Activated CD4-positive, alpha-beta T cell treated with anti-CD3 and anti-CD28 coated beads for 36 hours (primary cell): ENCODE measurements at regions of chr18 and their contacts with region 1.

Region 1: DNA sequence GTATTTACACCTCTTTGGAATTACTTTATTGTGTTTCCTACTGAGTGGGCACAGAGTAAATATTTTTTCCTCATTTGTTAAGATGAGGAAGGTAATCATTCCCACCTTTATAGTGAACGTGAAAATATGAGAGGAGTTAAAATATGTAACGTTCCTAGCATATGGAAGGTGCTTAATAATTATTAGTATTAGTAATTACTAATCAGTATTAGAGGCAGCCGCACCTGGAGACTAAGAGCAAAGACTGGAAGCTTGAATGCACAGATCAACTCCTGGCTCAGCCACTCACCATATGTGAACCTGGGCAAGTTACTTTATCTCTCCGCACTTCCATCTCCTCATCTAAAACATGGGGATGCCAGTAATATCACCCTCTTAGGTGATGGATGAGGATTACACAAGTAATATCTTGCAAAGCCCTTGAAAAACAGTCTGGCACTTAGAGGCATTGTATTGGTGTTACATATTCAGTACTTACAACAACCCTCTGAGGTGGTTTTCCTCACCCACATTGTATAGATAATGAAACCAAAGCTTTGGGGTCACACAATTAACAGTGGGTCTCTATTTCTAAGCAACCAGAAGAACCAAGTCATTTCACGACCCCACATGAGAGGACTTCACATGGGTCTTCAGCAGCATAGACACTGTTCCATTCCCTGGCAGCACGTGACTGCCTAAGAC is 100.3 kb upstream of the KCTD1 start:
- DNase-seq: no peak
- ATAC-seq: no peak
- H3K4me3 Mint-ChIP-seq: no peak overlapping the region
- H3K27ac Mint-ChIP-seq: no peak overlapping the region
- H3K4me1 Mint-ChIP-seq: no peaks in the 10 kb centered on the region
- H3K27me3 Mint-ChIP-seq: peaks cover 31% of the 10 kb centered on the region

Region 2: GRCh38 chr18:26192233-26192632 is 456.4 kb before region 1 on chr18:
- CTCF ChIA-PET with region 1: no interaction called
- POLR2A ChIA-PET with region 1: no interaction called
- intact Hi-C with region 1: no loop called
- DNase-seq: no peak
- ATAC-seq: no peak
- H3K4me3 Mint-ChIP-seq: no peak overlapping the region
- H3K27ac Mint-ChIP-seq: no peak overlapping the region
- H3K4me1 Mint-ChIP-seq: peaks cover 14% of the 10 kb centered on the region
- H3K27me3 Mint-ChIP-seq: no peaks in the 10 kb centered on the region

Region 3: GRCh38 chr18:26307189-26307773 is 341.4 kb before region 1 on chr18:
- CTCF ChIA-PET with region 1: no interaction called
- POLR2A ChIA-PET with region 1: no interaction called
- intact Hi-C with region 1: loop called in 1 of 2 experiments (anchors 1 kb)
- DNase-seq: peak; percentile 10
- ATAC-seq: peak; percentile 58
- H3K4me3 Mint-ChIP-seq: no peak overlapping the region
- H3K27ac Mint-ChIP-seq: no peak overlapping the region
- H3K4me1 Mint-ChIP-seq: no peaks in the 10 kb centered on the region
- H3K27me3 Mint-ChIP-seq: no peaks in the 10 kb centered on the region

Region 4: DNA sequence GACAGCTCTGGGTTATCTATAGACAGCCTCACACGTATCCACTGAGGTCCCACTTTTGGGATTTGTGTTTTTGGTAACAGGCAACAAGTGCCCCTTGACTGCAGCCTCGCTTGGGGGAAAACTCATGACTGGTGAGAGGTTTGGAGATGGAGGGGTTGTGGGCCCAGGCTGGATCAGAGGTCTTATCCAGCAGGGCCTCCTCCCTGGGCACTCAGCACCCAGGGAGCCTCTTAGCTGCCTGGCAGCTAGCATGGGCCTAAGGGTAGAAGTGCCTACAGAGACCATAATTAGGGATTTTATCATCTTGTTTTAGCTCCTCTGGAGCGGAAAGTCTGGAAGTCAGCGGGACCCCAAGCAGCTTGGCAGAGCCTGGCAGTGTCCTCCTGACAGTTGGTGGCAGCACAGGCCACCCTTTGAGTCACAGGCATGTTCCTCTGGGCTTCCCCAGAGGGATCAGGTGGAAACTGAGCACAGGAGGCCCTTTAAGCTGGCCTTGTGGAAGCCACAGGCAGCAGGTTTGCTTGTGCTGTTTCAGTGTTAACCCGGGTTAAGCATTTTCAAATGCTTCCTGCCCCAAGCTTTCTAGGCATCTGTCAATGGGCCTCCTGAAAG is 243.4 kb before region 1 on chr18:
- CTCF ChIA-PET with region 1: no interaction called
- POLR2A ChIA-PET with region 1: no interaction called
- intact Hi-C with region 1: loop called in 1 of 2 experiments (anchors 5 kb)
- DNase-seq: peak; percentile 41
- ATAC-seq: peak; percentile 47
- H3K4me3 Mint-ChIP-seq: no peak overlapping the region
- H3K27ac Mint-ChIP-seq: no peak overlapping the region
- H3K4me1 Mint-ChIP-seq: no peaks in the 10 kb centered on the region
- H3K27me3 Mint-ChIP-seq: no peaks in the 10 kb centered on the region

Region 5: GRCh38 chr18:27674411-27674810 is 1025.8 kb after region 1 on chr18:
- CTCF ChIA-PET with region 1: no interaction called
- POLR2A ChIA-PET with region 1: no interaction called
- intact Hi-C with region 1: no loop called
- DNase-seq: no peak
- ATAC-seq: no peak
- H3K4me3 Mint-ChIP-seq: no peak overlapping the region
- H3K27ac Mint-ChIP-seq: no peak overlapping the region
- H3K4me1 Mint-ChIP-seq: no peaks in the 10 kb centered on the region
- H3K27me3 Mint-ChIP-seq: no peaks in the 10 kb centered on the region